ENCODE measurements at regions of chr22 and their contacts with region 1.

Region 1: GRCh38 chr22:17057959-17058814 is 26.6 kb upstream of the IL17RA start:
- DNase-seq: peak; percentile 31 to 65 (median 50)
- H3K4me3 ChIP-seq: no peak overlapping the region
- H3K27ac ChIP-seq: no peak overlapping the region
- H3K4me1 ChIP-seq: peaks cover 0 to 5% (median under 1%) of the 10 kb centered on the region in 4 experiments
- H3K27me3 ChIP-seq: no peaks in the 10 kb centered on the region

Region 2: DNA sequence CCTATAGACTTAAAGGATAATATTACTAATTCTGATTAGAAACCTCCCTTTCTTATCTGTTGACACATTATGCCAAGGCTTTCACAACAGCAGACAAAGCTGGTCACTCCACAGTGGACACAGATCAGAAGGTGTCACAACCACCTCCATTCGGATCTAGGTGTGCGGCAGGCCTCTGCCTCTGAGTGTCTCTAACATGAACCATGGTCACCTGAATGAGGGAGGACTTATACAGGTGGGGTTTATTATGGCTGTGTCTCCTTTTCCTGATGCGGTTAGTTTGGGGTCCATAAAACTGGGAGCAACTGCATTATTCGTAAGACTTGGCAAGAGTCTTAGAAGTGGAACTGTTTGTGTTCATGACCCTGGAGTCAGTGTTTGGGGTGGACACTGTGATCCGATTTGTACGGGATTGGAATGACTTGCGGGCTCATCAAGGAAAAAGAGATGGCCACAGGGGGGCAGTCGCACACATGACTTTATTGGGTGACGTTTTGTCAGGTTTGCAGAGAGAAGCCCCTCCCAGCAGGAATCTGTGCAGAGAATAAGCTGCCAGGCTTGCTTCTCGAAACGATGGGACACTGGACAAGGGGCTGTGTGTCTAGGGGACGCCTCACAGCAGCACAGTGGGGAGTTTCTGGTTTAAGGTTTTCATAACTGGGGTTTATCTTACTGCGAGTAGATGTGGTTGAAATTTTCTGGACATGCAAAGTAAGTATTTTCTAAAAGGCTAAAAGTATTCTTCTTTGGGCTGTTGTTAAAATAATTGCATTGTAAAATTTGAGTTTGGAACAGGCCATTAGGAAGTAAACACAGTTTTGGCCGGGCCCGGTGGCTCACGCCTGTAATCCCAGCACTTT is 140.8 kb before region 1 on chr22:
- CTCF ChIA-PET with region 1: interaction called, 35 read pairs
- POLR2A ChIA-PET with region 1: no interaction called
- DNase-seq: peak; percentile 63 to 78 (median 73)
- H3K4me3 ChIP-seq: no peak overlapping the region
- H3K27ac ChIP-seq: no peak overlapping the region
- H3K4me1 ChIP-seq: peaks cover 5 to 28% (median 22%) of the 10 kb centered on the region in 4 experiments
- H3K27me3 ChIP-seq: peaks cover 0 to 2% (median 0%) of the 10 kb centered on the region in 5 experiments

Region 3: DNA sequence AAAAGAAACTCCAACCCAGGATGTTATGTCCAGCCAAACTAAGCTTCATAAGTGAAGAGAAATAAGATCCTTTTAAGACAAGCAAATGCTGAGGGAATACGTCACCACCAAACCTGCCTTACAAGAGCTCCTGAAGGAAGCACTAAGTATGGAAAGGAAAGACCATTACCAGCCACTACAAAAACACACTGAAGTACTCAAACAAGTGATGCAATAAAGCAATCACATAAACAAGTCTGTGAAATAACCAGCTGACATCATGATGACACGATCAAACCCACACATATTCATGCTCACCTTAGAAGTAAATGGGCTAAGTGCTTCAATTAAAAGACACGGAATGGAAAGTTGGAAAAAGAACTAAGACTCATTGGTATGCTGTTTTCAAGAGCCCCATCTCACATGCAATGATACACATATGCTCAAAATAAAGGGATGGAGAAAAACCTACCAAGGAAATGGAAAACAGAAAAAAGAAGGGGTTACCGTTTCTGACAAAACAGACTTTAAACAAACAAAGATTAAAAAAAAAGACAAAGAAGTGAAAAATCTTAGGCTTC is 132.7 kb before region 1 on chr22:
- CTCF ChIA-PET with region 1: interaction called, 11 read pairs
- POLR2A ChIA-PET with region 1: no interaction called
- DNase-seq: no peak
- H3K4me3 ChIP-seq: no peak overlapping the region
- H3K27ac ChIP-seq: no peak overlapping the region
- H3K4me1 ChIP-seq: peaks cover 0 to 10% (median 8%) of the 10 kb centered on the region in 4 experiments
- H3K27me3 ChIP-seq: peaks cover 0 to under 1% (median 0%) of the 10 kb centered on the region in 5 experiments

Region 4: GRCh38 chr22:17013396-17014100 is 44.6 kb before region 1 on chr22:
- CTCF ChIA-PET with region 1: no interaction called
- POLR2A ChIA-PET with region 1: no interaction called
- DNase-seq: no peak
- H3K4me3 ChIP-seq: no peak overlapping the region
- H3K27ac ChIP-seq: no peak overlapping the region
- H3K4me1 ChIP-seq: no peaks in the 10 kb centered on the region
- H3K27me3 ChIP-seq: peaks cover 0 to 4% (median 0%) of the 10 kb centered on the region in 5 experiments

Region 5: GRCh38 chr22:17046566-17047348 is 11.4 kb before region 1 on chr22:
- CTCF ChIA-PET with region 1: interaction called, 11 read pairs
- POLR2A ChIA-PET with region 1: no interaction called
- DNase-seq: no peak
- H3K4me3 ChIP-seq: no peak overlapping the region
- H3K27ac ChIP-seq: no peak overlapping the region
- H3K4me1 ChIP-seq: no peaks in the 10 kb centered on the region
- H3K27me3 ChIP-seq: no peaks in the 10 kb centered on the region